WTC11 (cell line): ENCODE measurements at regions of chr1 and their contacts with region 1.

Region 1: GRCh38 chr1:176691251-176692228 is 228.6 kb downstream of the PAPPA2 start:
- DNase-seq: peak; percentile 30
- ATAC-seq: peak; percentile 75
- H3K4me3 Mint-ChIP-seq: no peak overlapping the region
- H3K27ac Mint-ChIP-seq: no peak overlapping the region
- H3K4me1 Mint-ChIP-seq: peaks cover 25% of the 10 kb centered on the region
- H3K27me3 Mint-ChIP-seq: no peaks in the 10 kb centered on the region
- CTCF ChIP-seq: 0 out of 2 replicates have a peak, but pooled peaks have one; percentile 39

Region 2: DNA sequence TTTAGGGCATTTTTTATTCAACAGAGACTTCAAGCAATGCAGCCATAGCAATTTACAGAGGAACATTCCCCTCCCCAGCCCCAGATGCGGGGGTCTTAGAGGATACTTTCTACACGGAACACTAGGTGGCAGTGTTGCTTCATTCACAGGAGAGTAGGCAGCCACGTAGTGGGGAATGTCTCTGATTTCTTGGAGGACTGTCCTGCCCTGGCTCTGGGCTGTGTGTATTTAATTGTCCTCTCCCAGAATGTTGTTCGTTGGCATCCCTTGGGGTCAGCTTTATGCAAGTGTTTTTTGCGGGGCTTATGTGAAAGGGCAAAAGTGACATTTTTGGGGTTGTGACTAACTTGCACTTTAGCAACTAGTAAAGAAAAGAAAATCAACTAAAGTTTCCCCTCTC is 131.7 kb before region 1 on chr1:
- CTCF ChIA-PET with region 1: interaction called, 26 read pairs
- POLR2A ChIA-PET with region 1: no interaction called
- DNase-seq: peak; percentile 66
- ATAC-seq: peak; percentile 93
- H3K4me3 Mint-ChIP-seq: no peak overlapping the region
- H3K27ac Mint-ChIP-seq: no peak overlapping the region
- H3K4me1 Mint-ChIP-seq: peaks cover 30% of the 10 kb centered on the region
- H3K27me3 Mint-ChIP-seq: no peaks in the 10 kb centered on the region
- CTCF ChIP-seq: peak; percentile 90

Region 3: GRCh38 chr1:176705585-176705984 is 14.0 kb after region 1 on chr1:
- CTCF ChIA-PET with region 1: interaction called, 11 read pairs
- POLR2A ChIA-PET with region 1: no interaction called
- DNase-seq: no peak
- ATAC-seq: peak; percentile 59
- H3K4me3 Mint-ChIP-seq: no peak overlapping the region
- H3K27ac Mint-ChIP-seq: no peak overlapping the region
- H3K4me1 Mint-ChIP-seq: no peaks in the 10 kb centered on the region
- H3K27me3 Mint-ChIP-seq: no peaks in the 10 kb centered on the region
- CTCF ChIP-seq: no peak

Region 4: GRCh38 chr1:176745945-176746344 is 54.4 kb after region 1 on chr1:
- CTCF ChIA-PET with region 1: interaction called, 11 read pairs
- POLR2A ChIA-PET with region 1: no interaction called
- DNase-seq: no peak
- ATAC-seq: peak; percentile 90
- H3K4me3 Mint-ChIP-seq: no peak overlapping the region
- H3K27ac Mint-ChIP-seq: no peak overlapping the region
- H3K4me1 Mint-ChIP-seq: no peaks in the 10 kb centered on the region; the same call in 1 of the 2 replicates
- H3K27me3 Mint-ChIP-seq: no peaks in the 10 kb centered on the region
- CTCF ChIP-seq: no peak